Transverse colon (tissue), 4 donors: ENCODE measurements at regions of chr11 and their contacts with region 1.

Region 1: GRCh38 chr11:59135648-59136461 is 6.8 kb upstream of the FAM111A start:
- DNase-seq: peak; percentile 85
- H3K4me3 ChIP-seq: peak overlapping the region in 1 of 4 donors; percentile 16
- H3K27ac ChIP-seq: no peak overlapping the region
- H3K4me1 ChIP-seq: peaks cover 0 to 6% (median 1%) of the 10 kb centered on the region in 4 donors
- H3K27me3 ChIP-seq: no peaks in the 10 kb centered on the region
- CTCF ChIP-seq: peak; percentile 89 to 98 (median 98)
- EP300 ChIP-seq: no peak
- POLR2A ChIP-seq: no peak

Region 2: DNA sequence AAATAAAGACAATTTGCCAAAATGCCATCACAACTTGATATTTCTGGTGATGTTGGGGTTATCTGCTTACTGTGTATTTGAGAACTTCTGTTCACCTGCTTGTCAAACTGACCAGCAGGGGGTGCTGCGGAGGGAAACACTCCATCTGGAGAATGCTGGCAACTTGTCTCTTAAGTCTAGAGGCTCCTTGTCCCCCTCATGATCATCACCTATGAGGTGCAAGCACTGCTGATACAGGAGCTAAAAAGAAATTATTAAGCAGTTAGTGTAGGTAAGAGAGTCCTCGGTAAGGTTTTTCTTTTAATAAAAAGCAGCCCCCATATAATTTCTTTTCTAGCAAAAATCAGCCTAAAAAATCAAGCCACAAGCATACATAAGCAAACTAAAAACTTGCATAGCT is 82.5 kb before region 1 on chr11:
- in situ Hi-C with region 1: no loop called
- intact Hi-C with region 1: loop called (anchors 5 kb)
- DNase-seq: peak; percentile 74
- H3K4me3 ChIP-seq: no peak overlapping the region
- H3K27ac ChIP-seq: no peak overlapping the region
- H3K4me1 ChIP-seq: peaks cover 0 to 7% (median 6%) of the 10 kb centered on the region in 4 donors
- H3K27me3 ChIP-seq: no peaks in the 10 kb centered on the region
- CTCF ChIP-seq: peak; percentile 46 to 80 (median 59)
- EP300 ChIP-seq: no peak
- POLR2A ChIP-seq: no peak

Region 3: GRCh38 chr11:59097113-59097708 is 38.6 kb before region 1 on chr11:
- in situ Hi-C with region 1: no loop called
- intact Hi-C with region 1: loop called (anchors 5 kb)
- DNase-seq: peak; percentile 75
- H3K4me3 ChIP-seq: no peak overlapping the region
- H3K27ac ChIP-seq: no peak overlapping the region
- H3K4me1 ChIP-seq: peaks cover 0 to 8% (median 5%) of the 10 kb centered on the region in 4 donors
- H3K27me3 ChIP-seq: peaks cover 10% of the 10 kb centered on the region
- CTCF ChIP-seq: peak; percentile 58 to 68 (median 63)
- EP300 ChIP-seq: no peak
- POLR2A ChIP-seq: no peak

Region 4: GRCh38 chr11:59475176-59475575 is 339.3 kb after region 1 on chr11:
- in situ Hi-C with region 1: no loop called
- intact Hi-C with region 1: no loop called
- DNase-seq: no peak
- H3K4me3 ChIP-seq: no peak overlapping the region
- H3K27ac ChIP-seq: no peak overlapping the region
- H3K4me1 ChIP-seq: no peaks in the 10 kb centered on the region
- H3K27me3 ChIP-seq: peaks cover 5% of the 10 kb centered on the region
- CTCF ChIP-seq: no peak
- EP300 ChIP-seq: no peak
- POLR2A ChIP-seq: no peak